ENCODE measurements at regions of chr7 and their contacts with region 1.

Region 1: GRCh38 chr7:100190048-100190711 is 12.5 kb downstream of the STAG3 start:
- DNase-seq: peak in 7 of 9 donors; percentile 36 to 66 (median 56)
- ATAC-seq: peak; percentile 86
- H3K4me3 ChIP-seq: no peak overlapping the region
- H3K4me3 Mint-ChIP-seq: peak overlapping the region in 3 of 10 donors; percentile 12 to 18 (median 15)
- H3K27ac ChIP-seq: peak overlapping the region; percentile 15
- H3K27ac Mint-ChIP-seq: peak overlapping the region in 8 of 9 donors; percentile 19 to 90 (median 76)
- H3K4me1 ChIP-seq: peaks cover 0 to 22% of the 10 kb centered on the region in 2 donors
- H3K4me1 Mint-ChIP-seq: peaks cover 16 to 56% (median 50%) of the 10 kb centered on the region in 7 donors
- H3K27me3 ChIP-seq: no peaks in the 10 kb centered on the region
- H3K27me3 Mint-ChIP-seq: no peaks in the 10 kb centered on the region

Region 2: DNA sequence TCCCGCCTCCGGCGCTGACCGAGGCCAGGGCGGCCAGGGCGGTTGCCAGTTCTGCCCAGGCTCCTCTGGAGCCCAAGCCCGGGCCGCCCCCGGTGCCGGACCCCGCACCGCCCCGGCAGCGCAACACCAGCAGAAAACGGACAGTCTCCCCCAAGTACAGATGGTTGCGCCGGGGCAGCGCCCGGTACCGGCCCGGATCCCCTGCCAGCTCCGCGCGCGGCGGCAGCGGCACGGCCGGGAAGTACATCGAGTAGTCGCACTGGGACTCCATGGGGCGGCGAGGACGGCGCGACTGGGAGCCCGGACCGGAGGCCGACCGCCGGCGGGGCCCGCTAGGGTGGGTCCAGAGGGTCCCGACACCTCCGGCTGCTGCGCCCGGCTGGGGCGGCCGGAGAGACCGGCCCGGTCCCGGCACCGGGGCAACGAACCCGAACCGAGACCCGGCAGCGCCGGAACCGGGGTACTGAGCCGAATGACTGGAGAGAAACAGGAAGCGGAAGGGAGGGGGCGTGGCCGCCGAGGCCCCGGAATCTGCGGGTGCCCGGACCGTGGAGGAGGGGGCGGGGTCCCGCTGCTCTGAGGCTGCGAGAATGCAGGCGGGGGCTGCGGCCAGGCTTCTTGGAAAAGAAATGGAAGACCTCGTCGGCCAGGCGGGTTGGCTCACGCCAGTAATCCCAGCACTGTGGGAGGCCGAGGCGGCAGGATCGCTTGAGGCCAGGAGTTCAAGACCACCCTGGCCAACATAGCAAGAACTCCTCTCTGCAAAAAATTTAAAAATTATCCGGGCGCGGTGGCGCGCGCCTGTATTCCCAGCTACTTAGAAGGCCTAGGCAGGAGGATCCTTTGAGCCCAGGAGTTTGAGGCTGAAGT is 31.7 kb before region 1 on chr7 and contains the start of gene TRAPPC14:
- CTCF ChIA-PET with region 1: interaction called, 13 read pairs
- POLR2A ChIA-PET with region 1: interaction called, 383 read pairs
- intact Hi-C with region 1: no loop called
- DNase-seq: peak; percentile 79 to 95 (median 88)
- ATAC-seq: peak; percentile 93
- H3K4me3 ChIP-seq: peak within 1 kb of the TSS; percentile 79
- H3K4me3 Mint-ChIP-seq: peak within 1 kb of the TSS; percentile 83 to 93 (median 88)
- H3K27ac ChIP-seq: peak within 1 kb of the TSS; percentile 88
- H3K27ac Mint-ChIP-seq: peak within 1 kb of the TSS; percentile 77 to 98 (median 89)
- H3K4me1 ChIP-seq: peaks cover 13 to 35% of the 10 kb centered on the region in 2 donors
- H3K4me1 Mint-ChIP-seq: peaks cover 39 to 81% (median 66%) of the 10 kb centered on the region in 7 donors
- H3K27me3 ChIP-seq: no peaks in the 10 kb centered on the region
- H3K27me3 Mint-ChIP-seq: no peaks in the 10 kb centered on the region
- total RNA-seq, gene TRAPPC14: 51.8 to 102 (median 70.2) TPM

Region 3: GRCh38 chr7:100177045-100178001 is 12.9 kb before region 1 on chr7 and contains the starts of genes GPC2 and STAG3:
- CTCF ChIA-PET with region 1: interaction called, 10 read pairs
- POLR2A ChIA-PET with region 1: interaction called, 383 read pairs
- intact Hi-C with region 1: no loop called
- DNase-seq: peak; percentile 95 to 99 (median 98)
- ATAC-seq: peak; percentile 97
- H3K4me3 ChIP-seq: peak within 1 kb of the TSS; percentile 70
- H3K4me3 Mint-ChIP-seq: peak within 1 kb of the TSS; percentile 76 to 84 (median 80)
- H3K27ac ChIP-seq: peak within 1 kb of the TSS; percentile 76
- H3K27ac Mint-ChIP-seq: peak within 1 kb of the TSS; percentile 42 to 92 (median 78)
- H3K4me1 ChIP-seq: peaks cover 7 to 28% of the 10 kb centered on the region in 2 donors
- H3K4me1 Mint-ChIP-seq: peaks cover 28 to 67% (median 52%) of the 10 kb centered on the region in 7 donors
- H3K27me3 ChIP-seq: no peaks in the 10 kb centered on the region
- H3K27me3 Mint-ChIP-seq: peaks cover 0 to 4% (median 0%) of the 10 kb centered on the region in 5 donors
- total RNA-seq, gene GPC2: 8.1 to 30.6 (median 18.2) TPM
- total RNA-seq, gene STAG3: 5.5 to 24.6 (median 9.5) TPM

Region 4: GRCh38 chr7:100208911-100209408 is 18.8 kb after region 1 on chr7:
- CTCF ChIA-PET with region 1: interaction called, 10 read pairs
- POLR2A ChIA-PET with region 1: interaction called, 7 read pairs
- intact Hi-C with region 1: loop called in 1 of 2 experiments (anchors 1 kb)
- DNase-seq: peak in 6 of 9 donors; percentile 29 to 38 (median 34)
- ATAC-seq: peak; percentile 54
- H3K4me3 ChIP-seq: peak overlapping the region; percentile 45
- H3K4me3 Mint-ChIP-seq: peak overlapping the region; percentile 46 to 77 (median 74)
- H3K27ac ChIP-seq: peak overlapping the region; percentile 49
- H3K27ac Mint-ChIP-seq: peak overlapping the region; percentile 66 to 98 (median 87)
- H3K4me1 ChIP-seq: peaks cover 44 to 45% of the 10 kb centered on the region in 2 donors
- H3K4me1 Mint-ChIP-seq: peaks cover 39 to 56% (median 54%) of the 10 kb centered on the region in 7 donors
- H3K27me3 ChIP-seq: no peaks in the 10 kb centered on the region
- H3K27me3 Mint-ChIP-seq: no peaks in the 10 kb centered on the region

Region 5: DNA sequence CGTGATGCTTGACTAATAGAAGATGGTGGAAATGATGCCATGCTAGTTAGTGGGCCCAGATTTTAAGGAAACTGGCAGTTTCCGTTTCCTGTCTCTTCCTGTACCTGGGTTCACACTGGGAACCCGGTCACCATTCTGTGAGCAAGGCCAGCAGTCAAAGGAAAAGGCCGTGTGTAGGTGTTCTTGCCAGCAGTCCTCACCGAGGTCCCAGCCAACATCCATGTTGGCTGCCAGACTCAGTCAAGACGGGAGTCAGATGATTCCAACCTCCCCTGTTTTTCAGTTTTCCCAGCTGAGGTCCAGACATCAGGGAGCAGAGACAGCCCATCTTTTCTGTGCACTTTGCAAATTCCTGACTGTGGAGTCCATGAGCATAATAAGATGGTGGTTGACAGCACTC is 152.6 kb after region 1 on chr7:
- CTCF ChIA-PET with region 1: interaction called, 4 read pairs
- POLR2A ChIA-PET with region 1: no interaction called
- intact Hi-C with region 1: loop called in 1 of 2 experiments (anchors 1 kb)
- DNase-seq: no peak
- ATAC-seq: no peak
- H3K4me3 ChIP-seq: no peak overlapping the region
- H3K4me3 Mint-ChIP-seq: no peak overlapping the region
- H3K27ac ChIP-seq: peak overlapping the region; percentile 38
- H3K27ac Mint-ChIP-seq: peak overlapping the region; percentile 49 to 90 (median 73)
- H3K4me1 ChIP-seq: peaks cover 4 to 9% of the 10 kb centered on the region in 2 donors
- H3K4me1 Mint-ChIP-seq: peaks cover 6 to 46% (median 34%) of the 10 kb centered on the region in 7 donors
- H3K27me3 ChIP-seq: no peaks in the 10 kb centered on the region
- H3K27me3 Mint-ChIP-seq: no peaks in the 10 kb centered on the region

Region 6: GRCh38 chr7:100407285-100408180 is 217.4 kb after region 1 on chr7:
- CTCF ChIA-PET with region 1: no interaction called
- POLR2A ChIA-PET with region 1: no interaction called
- intact Hi-C with region 1: loop called in 1 of 2 experiments (anchors 1 kb)
- DNase-seq: peak in 7 of 9 donors; percentile 35 to 69 (median 53)
- ATAC-seq: peak; percentile 97
- H3K4me3 ChIP-seq: no peak overlapping the region
- H3K4me3 Mint-ChIP-seq: no peak overlapping the region
- H3K27ac ChIP-seq: no peak overlapping the region
- H3K27ac Mint-ChIP-seq: peak overlapping the region in 1 of 9 donors; percentile 65
- H3K4me1 ChIP-seq: no peaks in the 10 kb centered on the region
- H3K4me1 Mint-ChIP-seq: peaks cover 0 to 5% (median 2%) of the 10 kb centered on the region in 7 donors
- H3K27me3 ChIP-seq: no peaks in the 10 kb centered on the region
- H3K27me3 Mint-ChIP-seq: peaks cover 0 to 32% (median 0%) of the 10 kb centered on the region in 5 donors

Region 7: GRCh38 chr7:100632951-100633717 is 443.0 kb after region 1 on chr7:
- CTCF ChIA-PET with region 1: no interaction called
- POLR2A ChIA-PET with region 1: no interaction called
- intact Hi-C with region 1: no loop called
- DNase-seq: peak in 8 of 9 donors; percentile 39 to 72 (median 45)
- ATAC-seq: peak; percentile 79
- H3K4me3 ChIP-seq: peak overlapping the region; percentile 68
- H3K4me3 Mint-ChIP-seq: peak overlapping the region; percentile 79 to 89 (median 84)
- H3K27ac ChIP-seq: peak overlapping the region; percentile 56
- H3K27ac Mint-ChIP-seq: peak overlapping the region in 7 of 9 donors; percentile 40 to 92 (median 63)
- H3K4me1 ChIP-seq: no peaks in the 10 kb centered on the region
- H3K4me1 Mint-ChIP-seq: peaks cover 10 to 42% (median 25%) of the 10 kb centered on the region in 7 donors
- H3K27me3 ChIP-seq: no peaks in the 10 kb centered on the region
- H3K27me3 Mint-ChIP-seq: peaks cover 0 to 4% (median 0%) of the 10 kb centered on the region in 5 donors